Naive thymus-derived CD4-positive, alpha-beta T cell (primary cell): ENCODE measurements at regions of chrX and their contacts with region 1.

Region 1: GRCh38 chrX:136694431-136695087 is 46.6 kb downstream of the CD40LG start:
- DNase-seq: peak in 7 of 9 donors; percentile 54 to 72 (median 64)
- ATAC-seq: peak; percentile 83
- H3K4me3 ChIP-seq: peak overlapping the region; percentile 40
- H3K4me3 Mint-ChIP-seq: peak overlapping the region; percentile 69 to 85 (median 80)
- H3K27ac ChIP-seq: peak overlapping the region; percentile 81
- H3K27ac Mint-ChIP-seq: peak overlapping the region; percentile 93 to 99 (median 97)
- H3K4me1 ChIP-seq: peaks cover 54 to 59% of the 10 kb centered on the region in 2 donors
- H3K4me1 Mint-ChIP-seq: peaks cover 21 to 83% (median 64%) of the 10 kb centered on the region in 7 donors
- H3K27me3 ChIP-seq: no peaks in the 10 kb centered on the region
- H3K27me3 Mint-ChIP-seq: no peaks in the 10 kb centered on the region

Region 2: DNA sequence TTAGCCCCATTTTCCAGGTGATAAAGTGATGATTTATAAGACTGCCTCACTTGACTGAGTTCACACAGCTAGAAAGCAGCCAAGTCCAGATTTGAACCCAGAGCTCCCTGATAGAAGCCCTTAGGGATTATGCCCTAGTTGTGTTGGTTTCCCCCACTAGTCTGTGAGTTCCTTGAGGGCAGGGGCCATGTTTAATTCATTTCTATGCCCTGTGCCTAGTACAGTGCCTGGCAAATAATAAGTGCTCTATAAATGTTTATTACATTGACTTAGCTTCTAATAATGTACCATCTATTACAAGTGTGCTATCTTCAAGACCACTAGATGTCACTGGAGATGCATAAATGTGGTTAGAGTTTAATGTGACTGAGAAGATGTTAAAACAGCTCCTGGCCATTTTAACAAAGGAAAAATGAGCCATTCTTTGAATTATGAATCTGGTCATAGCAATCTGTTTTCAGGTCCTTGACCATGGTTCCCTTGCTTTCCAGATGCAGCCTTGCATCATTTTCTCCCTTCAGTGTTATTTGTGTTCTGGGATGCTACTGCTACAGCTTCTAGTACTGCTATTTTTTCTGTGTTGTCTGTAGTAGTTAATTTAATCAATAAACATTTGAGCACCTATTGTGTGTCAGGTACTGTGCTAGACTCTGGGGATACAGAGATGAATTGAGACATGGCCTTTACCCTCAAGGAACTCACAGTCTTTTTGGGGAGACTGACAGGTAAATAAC is 666.1 kb before region 1 on chrX:
- CTCF ChIA-PET with region 1: no interaction called
- POLR2A ChIA-PET with region 1: no interaction called
- intact Hi-C with region 1: loop called in 1 of 2 experiments (anchors 1 kb)
- DNase-seq: peak in 7 of 9 donors; percentile 26 to 53 (median 41)
- ATAC-seq: peak; percentile 76
- H3K4me3 ChIP-seq: no peak overlapping the region
- H3K4me3 Mint-ChIP-seq: no peak overlapping the region
- H3K27ac ChIP-seq: no peak overlapping the region
- H3K27ac Mint-ChIP-seq: no peak overlapping the region
- H3K4me1 ChIP-seq: no peaks in the 10 kb centered on the region
- H3K4me1 Mint-ChIP-seq: peaks cover 0 to under 1% (median 0%) of the 10 kb centered on the region in 7 donors
- H3K27me3 ChIP-seq: no peaks in the 10 kb centered on the region
- H3K27me3 Mint-ChIP-seq: no peaks in the 10 kb centered on the region

Region 3: DNA sequence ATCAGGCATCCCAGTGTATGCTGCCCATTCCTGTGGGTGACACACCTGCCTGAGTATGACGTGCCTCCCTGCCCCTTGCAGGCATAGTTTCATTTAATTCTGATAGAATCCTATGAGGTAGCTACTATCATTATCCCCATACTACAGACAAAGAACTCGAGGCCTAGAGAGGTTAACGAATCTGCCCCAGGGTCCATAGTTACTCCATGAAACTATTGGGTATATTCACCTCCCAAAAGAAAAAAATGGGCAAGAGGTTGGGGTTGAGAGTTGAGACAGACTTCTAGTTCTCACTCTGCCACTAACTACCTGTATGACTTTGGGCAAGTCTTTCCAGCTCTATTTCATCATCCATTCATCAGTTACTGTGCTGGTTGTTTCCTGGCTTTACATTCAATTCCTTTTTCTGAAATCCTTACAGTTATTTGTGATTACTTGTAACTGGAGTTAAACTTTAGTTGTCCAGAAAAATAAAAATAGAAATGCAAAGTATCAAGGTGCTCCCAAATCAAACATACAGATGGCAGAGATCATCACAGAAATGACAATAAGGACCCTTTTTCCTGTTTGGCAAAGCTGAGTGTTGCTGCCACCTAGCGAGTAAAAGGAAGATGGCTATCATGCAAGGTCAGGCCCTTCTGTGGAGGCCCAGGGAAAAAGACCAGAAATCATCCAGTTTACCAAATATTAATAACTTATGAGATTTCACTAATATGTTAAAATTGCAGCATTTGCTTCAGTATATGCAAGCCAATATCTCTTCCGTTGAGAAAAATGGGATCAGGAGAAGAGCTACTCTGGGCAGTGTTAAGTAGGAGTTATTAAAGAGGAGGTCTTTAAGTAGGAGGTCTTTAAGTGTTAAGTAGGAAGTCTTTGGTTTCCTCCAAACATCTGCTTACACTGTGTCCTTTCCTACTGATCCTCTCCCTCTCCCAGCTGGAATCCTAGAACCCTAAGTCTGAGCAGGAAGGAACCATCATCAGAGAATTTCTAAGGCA is 426.2 kb before region 1 on chrX:
- CTCF ChIA-PET with region 1: interaction called, 3 read pairs
- POLR2A ChIA-PET with region 1: no interaction called
- intact Hi-C with region 1: loop called in 1 of 2 experiments (anchors 10 kb)
- DNase-seq: peak in 7 of 9 donors; percentile 12 to 52 (median 43)
- ATAC-seq: peak; percentile 54
- H3K4me3 ChIP-seq: no peak overlapping the region
- H3K4me3 Mint-ChIP-seq: no peak overlapping the region
- H3K27ac ChIP-seq: no peak overlapping the region
- H3K27ac Mint-ChIP-seq: no peak overlapping the region
- H3K4me1 ChIP-seq: no peaks in the 10 kb centered on the region
- H3K4me1 Mint-ChIP-seq: peaks cover 0 to 11% (median 0%) of the 10 kb centered on the region in 7 donors
- H3K27me3 ChIP-seq: no peaks in the 10 kb centered on the region
- H3K27me3 Mint-ChIP-seq: no peaks in the 10 kb centered on the region

Region 4: GRCh38 chrX:136588041-136588788 is 106.3 kb before region 1 on chrX:
- CTCF ChIA-PET with region 1: interaction called, 4 read pairs
- POLR2A ChIA-PET with region 1: interaction called, 4 read pairs
- intact Hi-C with region 1: loop called in 1 of 2 experiments (anchors 2 kb)
- DNase-seq: peak in 3 of 9 donors; percentile 16 to 41 (median 33)
- ATAC-seq: peak; percentile 51
- H3K4me3 ChIP-seq: no peak overlapping the region
- H3K4me3 Mint-ChIP-seq: peak overlapping the region in 9 of 10 donors; percentile 26 to 80 (median 70)
- H3K27ac ChIP-seq: peak overlapping the region; percentile 63
- H3K27ac Mint-ChIP-seq: peak overlapping the region; percentile 88 to 98 (median 95)
- H3K4me1 ChIP-seq: peaks cover 43 to 44% of the 10 kb centered on the region in 2 donors
- H3K4me1 Mint-ChIP-seq: peaks cover 12 to 52% (median 50%) of the 10 kb centered on the region in 7 donors
- H3K27me3 ChIP-seq: no peaks in the 10 kb centered on the region
- H3K27me3 Mint-ChIP-seq: no peaks in the 10 kb centered on the region

Region 5: DNA sequence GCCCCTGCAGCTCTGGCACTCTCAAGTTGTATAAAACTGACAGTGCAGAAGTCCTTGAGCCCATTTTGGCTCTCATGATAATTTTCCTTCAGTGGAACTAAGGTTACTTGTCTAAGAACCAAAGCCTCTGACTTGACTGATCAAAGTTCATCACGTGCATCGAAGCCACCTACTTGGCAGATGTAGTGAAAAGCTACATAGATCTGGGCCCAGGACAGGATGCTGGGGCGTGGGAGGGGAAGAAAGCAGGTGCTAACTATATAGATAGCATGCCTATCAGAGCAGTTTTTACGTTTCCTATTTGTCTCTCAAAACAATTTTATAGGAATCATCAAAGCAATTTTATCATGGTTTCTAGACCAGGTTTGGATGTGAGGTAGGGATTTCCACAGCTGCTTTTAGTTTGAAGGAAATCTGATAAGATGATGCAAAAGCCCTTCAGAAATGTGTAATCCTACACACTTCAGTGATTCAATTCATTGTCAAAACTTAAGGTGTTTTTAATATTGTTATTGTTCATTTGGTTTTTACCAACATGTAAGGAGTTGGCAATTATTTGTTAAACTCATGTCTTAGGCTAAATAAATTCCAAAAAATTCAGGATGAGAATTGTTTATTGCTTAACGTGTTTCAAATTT is 47.8 kb before region 1 on chrX:
- CTCF ChIA-PET with region 1: interaction called, 13 read pairs
- POLR2A ChIA-PET with region 1: interaction called, 34 read pairs
- intact Hi-C with region 1: loop called in 1 of 2 experiments (anchors 1 kb)
- DNase-seq: peak in 7 of 9 donors; percentile 49 to 76 (median 67)
- ATAC-seq: peak; percentile 88
- H3K4me3 ChIP-seq: no peak overlapping the region
- H3K4me3 Mint-ChIP-seq: peak overlapping the region; percentile 69 to 99 (median 96)
- H3K27ac ChIP-seq: peak overlapping the region; percentile 79
- H3K27ac Mint-ChIP-seq: peak overlapping the region; percentile 92 to 99 (median 95)
- H3K4me1 ChIP-seq: peaks cover 14 to 40% of the 10 kb centered on the region in 2 donors
- H3K4me1 Mint-ChIP-seq: peaks cover 23 to 53% (median 47%) of the 10 kb centered on the region in 7 donors
- H3K27me3 ChIP-seq: no peaks in the 10 kb centered on the region
- H3K27me3 Mint-ChIP-seq: no peaks in the 10 kb centered on the region

Region 6: DNA sequence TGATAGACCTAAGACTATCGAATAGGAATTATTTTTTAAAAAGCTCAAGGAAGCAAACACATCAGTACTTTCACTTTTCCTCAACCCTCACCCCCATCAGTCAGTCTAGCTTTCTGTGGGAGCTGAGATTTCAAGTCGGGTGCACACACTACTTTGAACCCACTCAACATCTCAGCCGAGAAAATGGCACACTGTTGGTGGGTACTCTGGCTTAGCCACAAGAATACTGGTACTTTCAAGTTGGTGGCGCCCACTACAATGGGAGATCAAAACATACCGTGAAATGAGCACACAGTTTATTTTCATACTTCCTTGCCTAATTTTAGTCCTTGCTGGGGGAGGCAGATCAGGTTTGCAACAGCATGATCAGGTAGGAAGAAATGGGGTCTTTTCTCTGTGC is 36.4 kb before region 1 on chrX:
- CTCF ChIA-PET with region 1: interaction called, 5 read pairs
- POLR2A ChIA-PET with region 1: interaction called, 34 read pairs
- intact Hi-C with region 1: loop called (anchors 1 kb)
- DNase-seq: peak in 4 of 9 donors; percentile 33 to 48 (median 40)
- ATAC-seq: peak; percentile 49
- H3K4me3 ChIP-seq: peak overlapping the region; percentile 18
- H3K4me3 Mint-ChIP-seq: peak overlapping the region; percentile 61 to 99 (median 94)
- H3K27ac ChIP-seq: peak overlapping the region; percentile 79
- H3K27ac Mint-ChIP-seq: peak overlapping the region; percentile 85 to 99 (median 97)
- H3K4me1 ChIP-seq: peaks cover 23 to 71% of the 10 kb centered on the region in 2 donors
- H3K4me1 Mint-ChIP-seq: peaks cover 25 to 92% (median 87%) of the 10 kb centered on the region in 7 donors
- H3K27me3 ChIP-seq: peaks cover 0 to 3% of the 10 kb centered on the region in 2 donors
- H3K27me3 Mint-ChIP-seq: no peaks in the 10 kb centered on the region

Region 7: GRCh38 chrX:136674270-136674985 is 20.1 kb before region 1 on chrX:
- CTCF ChIA-PET with region 1: interaction called, 9 read pairs
- POLR2A ChIA-PET with region 1: interaction called, 15 read pairs
- intact Hi-C with region 1: loop called (anchors 1 kb)
- DNase-seq: peak in 7 of 9 donors; percentile 52 to 85 (median 72)
- ATAC-seq: peak; percentile 91
- H3K4me3 ChIP-seq: peak overlapping the region; percentile 16
- H3K4me3 Mint-ChIP-seq: peak overlapping the region; percentile 56 to 79 (median 72)
- H3K27ac ChIP-seq: peak overlapping the region; percentile 65
- H3K27ac Mint-ChIP-seq: peak overlapping the region; percentile 78 to 97 (median 93)
- H3K4me1 ChIP-seq: peaks cover 67 to 77% of the 10 kb centered on the region in 2 donors
- H3K4me1 Mint-ChIP-seq: peaks cover 36 to 98% (median 92%) of the 10 kb centered on the region in 7 donors
- H3K27me3 ChIP-seq: no peaks in the 10 kb centered on the region
- H3K27me3 Mint-ChIP-seq: no peaks in the 10 kb centered on the region